CD14-positive monocyte (primary cell): ENCODE measurements at regions of chr2 and their contacts with region 1.

Region 1: DNA sequence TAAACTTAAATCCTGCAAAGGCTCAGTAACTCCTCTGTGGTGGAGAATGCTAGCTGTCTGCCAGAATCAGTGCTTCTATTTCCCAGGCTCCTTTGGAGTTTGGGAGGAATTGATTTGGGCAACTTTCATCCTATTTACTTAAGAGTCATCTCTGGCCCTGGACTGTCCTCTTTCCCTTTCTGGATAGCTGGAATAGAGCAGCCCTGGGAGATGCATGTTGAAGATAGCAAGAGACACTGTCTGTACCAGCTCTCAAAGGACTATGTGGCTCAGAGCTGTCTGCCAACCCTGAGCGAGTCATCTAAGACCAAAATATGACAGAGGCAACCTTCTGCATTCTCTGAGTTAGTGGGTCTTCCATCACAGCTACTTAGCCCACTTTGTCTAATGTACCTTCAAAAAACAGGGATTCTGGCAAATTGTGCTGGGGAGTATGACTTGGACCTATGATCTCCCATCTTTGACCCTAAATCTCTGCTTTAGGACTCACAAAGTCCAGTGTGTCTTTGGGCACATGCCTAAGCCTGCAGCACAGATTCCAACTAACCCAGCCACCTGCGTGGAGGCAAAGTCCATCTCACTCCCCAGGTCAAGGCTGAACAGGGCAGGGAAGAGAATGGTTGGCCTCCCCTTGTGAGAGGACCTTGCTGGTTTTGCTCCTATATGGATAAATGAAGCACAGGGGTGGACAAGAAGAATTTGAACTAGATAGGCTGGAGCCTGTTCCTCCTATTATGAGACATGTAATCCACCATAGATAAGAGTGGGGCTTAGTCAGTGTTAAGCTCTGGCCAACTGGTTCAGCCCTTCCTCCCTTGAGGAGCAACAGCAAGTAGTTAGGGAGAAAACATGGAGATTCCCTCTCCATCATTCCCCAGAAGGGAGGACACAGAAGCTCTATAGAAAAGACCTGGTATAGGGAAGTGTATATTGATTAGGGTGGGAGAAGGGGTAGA is 99.1 kb upstream of the PELI1 start:
- DNase-seq: peak in 1 of 3 donors; percentile 22
- H3K4me3 ChIP-seq: no peak overlapping the region
- H3K4me3 Mint-ChIP-seq: no peak overlapping the region
- H3K27ac ChIP-seq: no peak overlapping the region
- H3K27ac Mint-ChIP-seq: peak overlapping the region in 1 of 7 donors; percentile 27
- H3K4me1 ChIP-seq: peaks cover 0 to 4% of the 10 kb centered on the region in 2 donors
- H3K4me1 Mint-ChIP-seq: peaks cover 9% of the 10 kb centered on the region
- H3K27me3 ChIP-seq: no peaks in the 10 kb centered on the region
- H3K27me3 Mint-ChIP-seq: peaks cover 0 to 1% (median 1%) of the 10 kb centered on the region in 3 donors
- CTCF ChIP-seq: no peak

Region 2: GRCh38 chr2:64291181-64291580 is 47.8 kb after region 1 on chr2:
- intact Hi-C with region 1: loop called in 1 of 2 experiments (anchors 10 kb)
- DNase-seq: no peak
- H3K4me3 ChIP-seq: no peak overlapping the region
- H3K4me3 Mint-ChIP-seq: no peak overlapping the region
- H3K27ac ChIP-seq: no peak overlapping the region
- H3K27ac Mint-ChIP-seq: peak overlapping the region in 1 of 7 donors; percentile 1
- H3K4me1 ChIP-seq: peaks cover 2 to 3% of the 10 kb centered on the region in 2 donors
- H3K4me1 Mint-ChIP-seq: peaks cover 8% of the 10 kb centered on the region
- H3K27me3 ChIP-seq: no peaks in the 10 kb centered on the region
- H3K27me3 Mint-ChIP-seq: peaks cover 2 to 7% (median 5%) of the 10 kb centered on the region in 3 donors
- CTCF ChIP-seq: no peak